ENCODE measurements at regions of chr3 and their contacts with region 1.

Region 1: DNA sequence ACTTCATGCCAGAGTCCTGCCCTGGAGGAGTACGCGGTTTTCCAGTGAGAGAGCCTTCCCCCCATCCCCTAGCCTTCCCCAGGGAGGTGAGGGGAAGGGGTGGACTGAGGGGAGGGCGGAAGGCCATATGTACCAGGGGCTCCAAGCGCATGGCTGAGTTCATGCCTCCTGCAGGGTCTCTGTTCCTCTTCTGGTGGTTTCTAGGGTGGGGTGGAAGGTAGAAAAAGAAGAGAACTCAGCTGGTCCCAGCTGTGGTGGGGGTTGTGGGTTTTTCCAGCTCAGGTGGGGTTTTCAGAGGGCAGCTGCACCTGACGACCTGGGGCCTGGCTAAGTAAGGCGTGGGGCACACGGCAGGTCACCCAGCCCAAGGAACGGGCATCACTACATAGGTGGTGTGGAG is 10.7 kb upstream of the IQSEC1 start:
- DNase-seq: peak; percentile 63
- ATAC-seq: peak; percentile 76
- H3K4me3 Mint-ChIP-seq: peak overlapping the region; percentile 72
- H3K27ac Mint-ChIP-seq: peak overlapping the region; percentile 92
- H3K4me1 Mint-ChIP-seq: peaks cover 92% of the 10 kb centered on the region
- H3K27me3 Mint-ChIP-seq: no peaks in the 10 kb centered on the region
- CTCF ChIP-seq: no peak

Region 2: DNA sequence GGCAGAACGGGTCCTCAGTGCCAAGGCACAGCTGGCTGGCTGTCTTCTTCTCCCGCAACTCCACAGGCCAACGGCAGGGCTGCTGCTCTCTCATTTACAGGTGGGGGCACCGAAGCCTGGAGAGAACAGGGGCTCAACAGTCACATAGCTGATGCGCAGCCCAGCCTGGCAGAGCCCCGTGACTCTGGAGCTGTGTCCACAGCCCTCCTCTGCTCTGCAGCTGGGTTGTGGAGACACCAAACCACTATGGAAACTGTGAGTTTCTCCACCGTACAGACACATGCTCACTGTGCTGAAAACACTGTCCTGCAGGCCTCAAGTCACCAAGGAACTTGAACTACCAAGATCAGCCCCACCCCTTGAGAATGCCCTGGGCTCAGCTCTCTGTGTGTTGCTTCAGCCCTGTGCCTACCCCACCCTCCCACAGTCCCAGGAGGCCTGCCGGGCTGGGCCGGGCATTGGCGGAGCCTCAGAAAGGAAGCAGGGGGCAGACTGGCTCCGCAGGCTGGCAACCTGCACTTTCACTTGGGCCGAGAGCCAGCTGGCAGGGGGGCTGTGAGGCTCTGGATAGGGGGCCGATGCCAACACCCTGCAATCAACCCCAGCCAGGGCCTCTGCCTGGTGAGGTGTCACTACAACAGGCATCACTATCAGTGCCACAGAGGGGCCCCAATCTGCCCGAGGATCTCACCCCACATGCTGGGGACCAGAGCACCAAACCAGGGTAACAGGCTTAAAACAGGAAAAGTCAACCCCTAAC is 128.8 kb before region 1 on chr3:
- CTCF ChIA-PET with region 1: no interaction called
- POLR2A ChIA-PET with region 1: no interaction called
- intact Hi-C with region 1: loop called (anchors 2 kb)
- DNase-seq: peak; percentile 67
- ATAC-seq: peak; percentile 95
- H3K4me3 Mint-ChIP-seq: peak overlapping the region; percentile 63
- H3K27ac Mint-ChIP-seq: peak overlapping the region; percentile 82
- H3K4me1 Mint-ChIP-seq: peaks cover 86% of the 10 kb centered on the region
- H3K27me3 Mint-ChIP-seq: no peaks in the 10 kb centered on the region
- CTCF ChIP-seq: no peak

Region 3: GRCh38 chr3:13012228-13012691 is 71.6 kb before region 1 on chr3:
- CTCF ChIA-PET with region 1: no interaction called
- POLR2A ChIA-PET with region 1: interaction called, 291 read pairs
- intact Hi-C with region 1: loop called (anchors 1 kb)
- DNase-seq: no peak
- ATAC-seq: peak; percentile 36
- H3K4me3 Mint-ChIP-seq: peak overlapping the region; percentile 87
- H3K27ac Mint-ChIP-seq: peak overlapping the region; percentile 95
- H3K4me1 Mint-ChIP-seq: peaks cover 98% of the 10 kb centered on the region
- H3K27me3 Mint-ChIP-seq: no peaks in the 10 kb centered on the region
- CTCF ChIP-seq: no peak

Region 4: DNA sequence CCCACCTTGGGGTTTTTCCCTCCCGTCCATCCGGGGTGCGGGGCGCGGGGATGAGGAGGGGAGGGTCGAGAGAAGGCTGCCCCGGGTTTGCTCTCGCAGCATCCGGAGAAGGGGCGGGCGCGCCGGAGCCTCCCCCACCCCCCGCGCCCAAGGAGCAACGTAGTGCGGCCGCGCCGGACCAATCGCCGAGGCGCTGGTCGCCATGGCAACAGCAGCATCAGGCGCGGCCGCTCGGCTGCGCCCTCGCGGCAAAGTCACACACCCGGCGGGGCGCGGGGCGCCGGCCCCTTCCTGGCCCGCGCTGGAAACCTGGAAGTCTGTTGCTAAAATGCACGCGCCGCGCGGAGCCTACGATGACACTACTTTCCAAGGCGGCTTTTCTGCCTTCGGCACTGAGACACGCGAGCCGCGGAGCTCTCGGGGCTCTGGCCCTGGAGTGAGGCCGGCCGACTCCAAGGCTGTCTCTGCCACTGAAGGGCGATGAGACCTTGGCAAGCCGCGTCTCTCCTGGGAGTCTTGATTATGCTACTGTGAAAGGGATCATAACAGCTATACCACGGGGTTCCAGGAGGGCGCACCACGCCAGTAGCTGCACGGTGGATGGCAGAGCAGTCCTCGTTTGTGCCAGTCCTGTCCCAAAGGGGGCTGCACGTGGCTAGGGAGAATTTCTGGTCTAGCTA is 10.4 kb before region 1 on chr3 and contains the start of gene IQSEC1:
- CTCF ChIA-PET with region 1: no interaction called
- POLR2A ChIA-PET with region 1: interaction called, 15 read pairs
- intact Hi-C with region 1: loop called (anchors 1 kb)
- DNase-seq: peak; percentile 76
- ATAC-seq: peak; percentile 66
- H3K4me3 Mint-ChIP-seq: peak within 1 kb of the TSS; percentile 86
- H3K27ac Mint-ChIP-seq: peak within 1 kb of the TSS; percentile 85
- H3K4me1 Mint-ChIP-seq: peaks cover 62% of the 10 kb centered on the region
- H3K27me3 Mint-ChIP-seq: no peaks in the 10 kb centered on the region
- CTCF ChIP-seq: no peak
- total RNA-seq, gene IQSEC1: 260 and 296 TPM in 2 replicates

Region 5: GRCh38 chr3:13110678-13111116 is 26.8 kb after region 1 on chr3:
- CTCF ChIA-PET with region 1: no interaction called
- POLR2A ChIA-PET with region 1: interaction called, 17 read pairs
- intact Hi-C with region 1: loop called (anchors 1 kb)
- DNase-seq: peak; percentile 62
- ATAC-seq: peak; percentile 90
- H3K4me3 Mint-ChIP-seq: peak overlapping the region; percentile 73
- H3K27ac Mint-ChIP-seq: peak overlapping the region; percentile 96
- H3K4me1 Mint-ChIP-seq: peaks cover 60% of the 10 kb centered on the region
- H3K27me3 Mint-ChIP-seq: no peaks in the 10 kb centered on the region
- CTCF ChIP-seq: no peak

Region 6: DNA sequence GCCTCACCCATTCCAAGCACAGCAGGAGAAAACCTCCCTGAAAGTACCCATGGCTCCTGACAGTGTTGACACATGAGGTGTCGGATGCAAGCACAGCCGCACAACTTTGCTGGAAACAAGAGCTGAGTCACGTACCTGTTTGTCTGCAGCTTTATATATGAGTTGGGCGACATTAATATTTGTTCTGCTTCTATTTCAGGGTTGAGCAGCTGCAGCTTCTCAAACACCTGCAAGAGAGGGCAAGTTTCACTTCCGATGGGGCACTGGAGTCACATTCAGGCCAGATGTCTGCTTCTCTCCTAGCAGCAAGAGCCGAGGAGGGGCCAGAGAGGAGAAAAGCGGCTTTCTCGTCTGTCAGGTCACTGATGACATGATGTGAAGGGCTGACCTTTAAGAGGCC is 248.3 kb after region 1 on chr3:
- CTCF ChIA-PET with region 1: no interaction called
- POLR2A ChIA-PET with region 1: interaction called, 8 read pairs
- intact Hi-C with region 1: loop called (anchors 2 kb)
- DNase-seq: peak; percentile 48
- ATAC-seq: peak; percentile 91
- H3K4me3 Mint-ChIP-seq: peak overlapping the region; percentile 56
- H3K27ac Mint-ChIP-seq: peak overlapping the region; percentile 88
- H3K4me1 Mint-ChIP-seq: peaks cover 39% of the 10 kb centered on the region
- H3K27me3 Mint-ChIP-seq: no peaks in the 10 kb centered on the region
- CTCF ChIP-seq: no peak

Region 7: GRCh38 chr3:13414040-13414729 is 330.3 kb after region 1 on chr3:
- CTCF ChIA-PET with region 1: no interaction called
- POLR2A ChIA-PET with region 1: interaction called, 6 read pairs
- intact Hi-C with region 1: loop called (anchors 2 kb)
- DNase-seq: peak; percentile 76
- ATAC-seq: peak; percentile 93
- H3K4me3 Mint-ChIP-seq: peak overlapping the region; percentile 79
- H3K27ac Mint-ChIP-seq: peak overlapping the region; percentile 98
- H3K4me1 Mint-ChIP-seq: peaks cover 67% of the 10 kb centered on the region
- H3K27me3 Mint-ChIP-seq: no peaks in the 10 kb centered on the region
- CTCF ChIP-seq: no peak